Right ventricle myocardium inferior (tissue), 1 donor: ENCODE measurements at regions of chr11 and their contacts with region 1.

Region 1: DNA sequence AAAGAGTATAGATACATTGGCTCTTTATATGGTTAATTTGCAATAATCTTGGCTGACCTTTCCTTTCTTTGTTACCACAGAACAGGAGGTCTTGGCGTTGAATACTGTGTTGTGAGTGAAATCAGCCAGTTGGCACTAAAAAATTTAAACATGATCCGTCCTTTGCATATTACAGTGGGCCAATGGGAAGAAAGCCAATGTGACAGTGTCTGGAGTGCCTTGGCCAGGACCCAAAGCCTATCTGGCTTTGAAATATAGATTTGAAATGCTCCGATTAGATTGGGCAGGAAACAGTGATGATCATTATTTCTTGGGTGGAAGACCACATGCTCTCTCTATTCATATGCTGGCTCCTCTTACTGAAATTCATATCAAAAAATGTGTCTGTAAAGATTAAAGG is 339.6 kb upstream of the ANO3 start:
- DNase-seq: no peak
- ATAC-seq: no peak

Region 2: DNA sequence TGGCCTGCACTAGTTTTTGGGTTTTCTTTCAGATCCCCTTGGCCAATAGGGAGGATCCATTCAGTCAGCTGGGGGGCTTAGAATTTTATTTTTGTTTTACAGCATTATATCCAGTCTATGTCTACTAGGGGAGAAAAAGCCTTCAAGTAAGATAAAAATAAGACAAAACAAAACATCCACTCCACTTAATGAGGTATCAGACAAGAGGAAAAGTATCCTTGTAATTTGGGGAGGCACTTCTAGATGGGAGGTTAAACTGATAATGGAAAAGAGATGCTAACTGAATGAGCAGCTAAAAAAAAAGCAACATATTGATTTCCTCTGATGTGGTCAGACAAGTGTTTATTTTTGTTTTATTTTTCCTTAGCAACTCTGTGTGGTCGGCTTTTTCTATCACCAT is 61.7 kb after region 1 on chr11:
- intact Hi-C with region 1: loop called (anchors 5 kb)
- DNase-seq: no peak
- ATAC-seq: no peak